GM10248 (cell line): ENCODE measurements at regions of chr11 and their contacts with region 1.

Region 1: DNA sequence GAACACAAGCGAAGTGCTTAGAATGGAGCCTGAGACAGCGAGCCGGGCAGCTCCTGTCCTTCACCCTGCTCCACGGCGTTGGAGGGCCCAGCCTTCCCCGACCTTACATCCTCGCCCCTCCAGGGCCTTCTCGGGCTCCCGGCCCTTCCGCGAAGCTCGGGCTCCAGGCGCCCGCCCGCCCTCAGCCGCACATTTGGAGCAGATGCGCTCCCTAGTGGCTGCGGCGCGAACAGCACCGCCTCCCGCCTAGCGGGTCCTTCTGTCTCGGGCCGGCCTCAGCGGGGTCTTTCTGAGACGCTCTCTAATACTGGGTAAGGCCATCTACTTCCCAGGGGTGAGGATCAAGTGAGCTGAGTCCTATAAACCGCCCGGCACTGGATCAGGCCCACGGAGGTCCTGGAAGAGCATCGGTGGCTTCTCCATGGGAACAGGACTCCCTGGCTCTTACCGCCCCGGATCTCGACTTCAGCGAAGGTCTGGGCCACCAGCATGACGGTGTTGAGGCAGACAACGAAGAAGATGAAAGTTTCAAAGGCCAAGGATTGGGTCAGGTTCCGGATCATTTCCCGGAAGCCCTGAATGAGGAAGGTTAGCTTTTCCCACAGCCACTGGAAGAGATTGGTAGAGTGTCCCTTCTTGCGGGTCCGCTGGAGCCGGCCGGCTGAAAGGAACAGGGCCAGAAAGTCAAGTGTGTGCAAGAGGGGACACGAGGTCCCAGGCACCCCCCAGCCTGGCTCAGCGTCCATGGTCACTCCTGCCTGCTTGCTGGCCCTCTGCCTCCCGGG is 3.7 kb downstream of the CATSPER1 start:
- DNase-seq: peak; percentile 92
- CTCF ChIP-seq: peak; percentile 97

Region 2: GRCh38 chr11:66001942-66002647 is 20.5 kb before region 1 on chr11 and contains the starts of genes BANF1 and EIF1AD:
- CTCF ChIA-PET with region 1: interaction called, 67 read pairs
- POLR2A ChIA-PET with region 1: no interaction called
- DNase-seq: peak; percentile 92
- CTCF ChIP-seq: no peak

Region 3: GRCh38 chr11:66035653-66036333 is 13.2 kb after region 1 on chr11:
- CTCF ChIA-PET with region 1: interaction called, 52 read pairs
- POLR2A ChIA-PET with region 1: no interaction called
- DNase-seq: no peak
- CTCF ChIP-seq: no peak

Region 4: DNA sequence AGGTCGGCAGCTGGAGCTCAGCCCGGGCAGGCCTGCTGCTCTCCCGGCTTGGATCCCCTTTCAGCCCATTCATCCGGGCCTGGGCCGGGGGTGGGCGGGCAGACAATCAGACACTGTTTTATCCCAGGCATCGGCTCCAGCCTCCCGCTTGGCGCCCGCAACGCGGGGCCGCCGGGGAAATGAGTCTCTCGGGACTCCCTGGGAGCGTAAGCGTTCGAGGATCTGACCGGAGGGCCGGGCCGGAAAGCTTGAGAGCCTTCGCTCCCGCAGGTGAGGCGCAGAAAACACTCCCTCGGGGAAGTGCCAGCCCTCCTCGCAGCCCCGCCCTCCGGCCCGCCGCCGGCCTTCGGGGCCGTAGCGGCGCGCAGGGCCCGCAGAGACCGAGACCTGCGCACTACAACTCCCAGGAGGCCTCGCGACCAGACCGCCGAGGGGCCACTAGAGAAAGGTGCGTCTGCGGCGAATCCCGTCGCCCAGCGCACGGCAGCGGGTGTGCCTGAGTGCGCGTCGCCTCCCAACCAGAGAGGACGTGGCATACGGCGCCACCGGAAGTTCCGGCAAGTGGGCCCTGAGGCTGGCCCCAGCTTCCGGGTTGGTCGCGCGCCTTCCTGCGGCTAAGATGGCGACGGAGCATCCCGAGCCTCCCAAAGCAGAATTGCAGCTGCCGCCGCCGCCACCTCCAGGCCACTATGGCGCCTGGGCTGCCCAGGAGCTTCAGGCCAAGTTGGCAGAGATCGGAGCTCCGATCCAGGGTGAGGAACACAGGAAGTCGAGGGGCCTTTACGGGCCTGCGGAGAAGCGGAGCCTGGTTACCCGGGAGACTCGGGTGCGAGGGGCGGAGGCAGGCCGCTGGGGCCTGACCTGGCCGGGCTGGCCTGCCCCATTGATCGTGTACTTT is 29.4 kb after region 1 on chr11 and contains the start of gene SF3B2:
- CTCF ChIA-PET with region 1: interaction called, 52 read pairs
- POLR2A ChIA-PET with region 1: no interaction called
- DNase-seq: peak; percentile 98
- CTCF ChIP-seq: no peak

Region 5: GRCh38 chr11:66195867-66196266 is 173.3 kb after region 1 on chr11:
- CTCF ChIA-PET with region 1: no interaction called
- POLR2A ChIA-PET with region 1: no interaction called
- DNase-seq: no peak
- CTCF ChIP-seq: no peak